Lower leg skin (tissue), 4 donors: ENCODE measurements at regions of chr12 and their contacts with region 1.

Region 1: DNA sequence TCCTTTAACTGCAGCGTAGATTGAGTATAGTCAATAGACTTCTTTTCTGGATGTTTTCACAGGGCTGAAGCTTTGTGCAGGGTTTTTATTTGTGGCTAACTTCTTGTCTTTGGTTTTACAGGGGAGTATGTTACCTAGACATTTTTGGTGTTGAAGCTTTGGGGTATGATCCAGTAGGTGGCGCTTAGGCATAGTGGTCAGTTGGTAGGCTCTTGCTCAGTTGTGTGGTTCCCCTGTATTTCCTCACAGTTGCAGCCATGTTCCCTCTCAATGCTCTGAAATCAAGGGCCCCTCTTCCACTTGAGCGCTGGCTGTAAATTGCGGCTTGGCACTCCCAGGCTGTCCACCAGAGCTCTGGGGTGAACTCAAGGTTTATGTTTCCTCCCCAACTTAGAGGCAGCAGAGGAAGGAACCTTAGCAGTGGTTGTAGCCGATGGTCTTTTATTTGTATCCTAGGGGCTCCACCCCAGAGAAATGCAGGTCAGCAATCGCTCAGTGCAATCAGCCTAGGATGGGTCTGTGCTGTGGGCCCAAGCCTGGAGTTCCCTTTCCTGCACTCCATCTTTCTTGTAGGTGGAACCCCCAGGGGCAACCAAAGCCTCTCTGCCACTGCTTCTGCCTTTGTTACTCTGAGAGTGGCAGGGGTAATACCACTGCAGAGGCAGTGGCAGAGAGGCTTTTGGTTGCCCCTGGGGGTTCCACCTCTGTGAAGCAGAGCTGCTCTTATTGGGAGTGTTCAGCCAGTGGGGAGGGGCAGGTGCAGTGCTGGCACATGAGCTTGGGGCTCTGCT is 55.1 kb downstream of the CMAS start:
- DNase-seq: no peak
- H3K4me3 ChIP-seq: no peak overlapping the region
- CTCF ChIP-seq: no peak
- POLR2A ChIP-seq: no peak

Region 2: DNA sequence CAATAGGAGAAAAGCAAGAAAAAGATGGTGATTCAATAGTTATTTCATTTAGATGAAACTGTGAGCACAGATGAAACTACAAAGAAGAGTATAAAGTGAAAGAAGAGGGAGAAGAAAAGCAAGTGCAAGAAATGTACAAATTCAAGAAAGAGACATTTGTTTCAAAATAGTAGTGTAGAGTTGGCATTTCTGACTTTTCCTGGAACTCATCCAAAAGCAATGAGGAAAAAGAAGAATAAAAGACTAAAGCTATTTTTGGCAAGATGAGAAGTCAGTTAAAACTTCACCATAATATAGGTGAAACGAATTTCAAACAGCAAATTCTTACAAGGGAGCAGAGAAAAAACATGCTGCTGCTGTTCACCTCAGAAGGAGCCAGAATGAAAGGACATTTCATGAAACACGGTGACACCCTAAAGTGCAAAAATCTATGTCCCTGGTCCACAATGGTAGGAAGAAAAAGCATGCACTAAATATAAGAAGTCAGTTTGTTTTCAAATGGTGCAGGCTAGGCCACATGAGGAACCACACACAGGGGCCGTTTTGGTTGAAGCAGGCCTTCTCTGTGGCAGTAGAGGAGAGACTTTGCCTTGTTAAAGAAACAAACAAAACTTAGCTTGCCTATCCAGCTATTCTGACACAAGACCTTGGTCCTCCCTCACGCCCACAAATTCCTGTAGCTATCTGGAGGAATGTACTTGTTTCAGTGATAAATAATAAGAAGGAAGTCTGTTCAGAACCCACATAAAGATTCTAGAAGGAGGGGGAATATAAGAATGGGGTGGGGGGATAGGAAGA is 66.2 kb before region 1 on chr12:
- intact Hi-C with region 1: no loop called
- DNase-seq: no peak
- H3K4me3 ChIP-seq: no peak overlapping the region
- CTCF ChIP-seq: no peak
- POLR2A ChIP-seq: no peak

Region 3: GRCh38 chr12:22083167-22083566 is 18.0 kb before region 1 on chr12:
- intact Hi-C with region 1: no loop called
- DNase-seq: peak in 1 of 2 donors; percentile 21
- H3K4me3 ChIP-seq: no peak overlapping the region
- CTCF ChIP-seq: no peak
- POLR2A ChIP-seq: no peak

Region 4: DNA sequence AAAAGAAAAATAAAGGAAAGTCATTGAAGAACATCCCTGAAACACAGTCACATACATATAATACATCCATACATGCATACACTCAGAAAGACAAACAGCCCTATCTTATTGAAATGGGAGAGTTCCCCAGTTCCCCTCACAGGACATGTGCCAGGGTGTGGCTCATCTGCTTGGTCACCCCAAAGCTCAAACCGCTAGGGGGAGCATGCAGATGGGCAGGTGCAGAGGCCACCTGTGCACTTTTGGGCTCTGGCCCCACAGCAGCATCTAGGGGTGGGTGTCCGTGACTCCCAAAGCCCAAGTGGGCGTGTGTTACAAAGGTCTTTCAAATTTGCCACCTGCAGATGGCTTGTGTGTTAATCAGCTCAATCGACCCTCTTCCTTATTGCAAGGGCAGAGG is 20.1 kb after region 1 on chr12:
- intact Hi-C with region 1: no loop called
- DNase-seq: no peak
- H3K4me3 ChIP-seq: no peak overlapping the region
- CTCF ChIP-seq: no peak
- POLR2A ChIP-seq: no peak

Region 5: GRCh38 chr12:22334410-22335290 is 233.5 kb after region 1 on chr12 and contains the start of gene ST8SIA1:
- intact Hi-C with region 1: loop called (anchors 10 kb)
- DNase-seq: peak; percentile 23 to 93
- H3K4me3 ChIP-seq: peak within 1 kb of the TSS; percentile 63
- CTCF ChIP-seq: no peak
- POLR2A ChIP-seq: no peak
- total RNA-seq, gene ST8SIA1: 2.6 to 9.5 (median 7.3) TPM